Caco-2 (cell line): ENCODE measurements at regions of chr3 and their contacts with region 1.

Region 1: DNA sequence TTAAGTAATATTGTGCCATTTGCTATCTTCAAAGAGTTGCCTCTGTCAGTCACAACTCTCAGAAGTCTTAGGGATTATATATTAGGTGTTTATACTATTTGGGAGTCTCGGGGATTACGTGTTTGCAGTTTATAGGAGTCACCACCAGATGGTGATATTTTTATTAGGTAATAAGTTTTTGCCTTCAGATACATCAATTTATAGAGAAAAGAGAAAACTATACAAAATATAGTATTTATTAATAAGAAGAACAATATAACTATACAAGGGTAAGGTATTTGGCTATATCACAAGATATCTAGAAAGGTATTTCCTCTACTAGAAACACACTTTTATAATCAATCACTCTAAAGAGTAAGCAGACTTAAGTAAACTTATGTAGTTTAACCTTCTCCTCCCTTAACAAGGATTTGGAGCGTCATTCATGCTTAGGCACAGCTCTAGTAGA is 10.7 kb upstream of the DHX36 start:
- DNase-seq: peak in 1 of 2 experiments; percentile 34
- H3K4me3 ChIP-seq: no peak overlapping the region
- H3K4me3 Mint-ChIP-seq: no peak overlapping the region
- H3K27ac Mint-ChIP-seq: no peak overlapping the region
- H3K4me1 ChIP-seq: peaks cover 19% of the 10 kb centered on the region
- H3K4me1 Mint-ChIP-seq: peaks cover 14% of the 10 kb centered on the region
- H3K27me3 ChIP-seq: no peaks in the 10 kb centered on the region
- H3K27me3 Mint-ChIP-seq: no peaks in the 10 kb centered on the region
- CTCF ChIP-seq: peak; percentile 44 to 55

Region 2: GRCh38 chr3:153976891-153977554 is 358.0 kb before region 1 on chr3:
- CTCF ChIA-PET with region 1: no interaction called
- POLR2A ChIA-PET with region 1: no interaction called
- intact Hi-C with region 1: no loop called
- DNase-seq: no peak
- H3K4me3 ChIP-seq: no peak overlapping the region
- H3K4me3 Mint-ChIP-seq: no peak overlapping the region
- H3K27ac Mint-ChIP-seq: no peak overlapping the region
- H3K4me1 ChIP-seq: peaks cover 7% of the 10 kb centered on the region; the same call in 1 of the 2 replicates
- H3K4me1 Mint-ChIP-seq: peaks cover 5% of the 10 kb centered on the region
- H3K27me3 ChIP-seq: no peaks in the 10 kb centered on the region
- H3K27me3 Mint-ChIP-seq: peaks cover 4% of the 10 kb centered on the region
- CTCF ChIP-seq: no peak

Region 3: DNA sequence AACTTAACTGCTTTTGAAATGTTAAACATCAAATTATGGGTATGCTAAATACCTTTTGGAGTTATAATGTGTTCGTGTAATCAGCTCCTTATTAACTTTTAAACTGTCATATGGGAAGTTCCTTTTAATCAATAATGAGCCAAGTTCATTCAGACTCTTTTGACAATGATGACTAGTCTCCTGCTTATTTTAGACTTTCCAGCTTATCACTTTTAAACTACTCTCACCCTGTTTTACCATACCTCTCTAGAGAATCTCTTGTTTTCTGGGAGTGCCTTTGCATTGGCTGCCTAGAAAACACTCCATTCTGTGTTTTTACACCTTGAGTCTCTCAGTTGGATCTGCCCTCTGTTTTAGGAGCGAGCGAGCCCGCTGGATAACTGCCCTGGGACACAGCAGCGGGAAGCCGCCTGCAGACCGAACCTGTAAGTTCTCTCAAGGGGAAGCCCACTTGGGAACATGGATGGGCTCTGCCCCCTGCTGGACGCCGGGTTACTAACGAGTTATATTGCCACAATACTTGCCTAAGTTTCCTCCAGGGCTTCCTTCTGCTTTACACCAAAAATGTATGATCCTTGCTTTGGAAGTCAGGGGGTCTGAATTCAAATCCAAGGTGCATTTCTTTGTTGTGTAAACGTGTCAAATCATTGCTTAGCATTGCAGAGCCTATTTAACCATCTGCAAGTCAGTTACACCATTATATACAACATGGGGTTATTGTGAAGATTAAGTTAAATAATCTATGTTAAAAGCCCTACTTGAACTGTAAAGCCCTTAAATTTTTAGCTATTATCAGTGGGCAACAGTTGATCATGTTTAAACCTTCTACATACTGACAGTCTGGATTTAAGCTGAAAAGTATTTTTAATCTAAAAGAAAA is 82.0 kb before region 1 on chr3:
- CTCF ChIA-PET with region 1: interaction called, 10 read pairs
- POLR2A ChIA-PET with region 1: no interaction called
- intact Hi-C with region 1: no loop called
- DNase-seq: peak; percentile 83 to 89
- H3K4me3 ChIP-seq: no peak overlapping the region
- H3K4me3 Mint-ChIP-seq: no peak overlapping the region
- H3K27ac Mint-ChIP-seq: peak overlapping the region; percentile 11
- H3K4me1 ChIP-seq: no peaks in the 10 kb centered on the region
- H3K4me1 Mint-ChIP-seq: peaks cover 6% of the 10 kb centered on the region
- H3K27me3 ChIP-seq: no peaks in the 10 kb centered on the region
- H3K27me3 Mint-ChIP-seq: no peaks in the 10 kb centered on the region
- CTCF ChIP-seq: peak; percentile 83 to 91

Region 4: GRCh38 chr3:154428286-154429206 is 93.5 kb after region 1 on chr3:
- CTCF ChIA-PET with region 1: no interaction called
- POLR2A ChIA-PET with region 1: no interaction called
- intact Hi-C with region 1: loop called (anchors 1 kb)
- DNase-seq: no peak
- H3K4me3 ChIP-seq: no peak overlapping the region
- H3K4me3 Mint-ChIP-seq: no peak overlapping the region
- H3K27ac Mint-ChIP-seq: no peak overlapping the region
- H3K4me1 ChIP-seq: peaks cover 11% of the 10 kb centered on the region; the same call in 1 of the 2 replicates
- H3K4me1 Mint-ChIP-seq: no peaks in the 10 kb centered on the region
- H3K27me3 ChIP-seq: no peaks in the 10 kb centered on the region
- H3K27me3 Mint-ChIP-seq: no peaks in the 10 kb centered on the region
- CTCF ChIP-seq: no peak

Region 5: GRCh38 chr3:154552338-154552737 is 217.3 kb after region 1 on chr3:
- CTCF ChIA-PET with region 1: no interaction called
- POLR2A ChIA-PET with region 1: no interaction called
- intact Hi-C with region 1: loop called (anchors 5 kb)
- DNase-seq: peak in 1 of 2 experiments; percentile 27
- H3K4me3 ChIP-seq: no peak overlapping the region
- H3K4me3 Mint-ChIP-seq: no peak overlapping the region
- H3K27ac Mint-ChIP-seq: no peak overlapping the region
- H3K4me1 ChIP-seq: no peaks in the 10 kb centered on the region
- H3K4me1 Mint-ChIP-seq: no peaks in the 10 kb centered on the region
- H3K27me3 ChIP-seq: no peaks in the 10 kb centered on the region
- H3K27me3 Mint-ChIP-seq: peaks cover 3% of the 10 kb centered on the region
- CTCF ChIP-seq: peak in 1 of 2 experiments; percentile 27

Region 6: DNA sequence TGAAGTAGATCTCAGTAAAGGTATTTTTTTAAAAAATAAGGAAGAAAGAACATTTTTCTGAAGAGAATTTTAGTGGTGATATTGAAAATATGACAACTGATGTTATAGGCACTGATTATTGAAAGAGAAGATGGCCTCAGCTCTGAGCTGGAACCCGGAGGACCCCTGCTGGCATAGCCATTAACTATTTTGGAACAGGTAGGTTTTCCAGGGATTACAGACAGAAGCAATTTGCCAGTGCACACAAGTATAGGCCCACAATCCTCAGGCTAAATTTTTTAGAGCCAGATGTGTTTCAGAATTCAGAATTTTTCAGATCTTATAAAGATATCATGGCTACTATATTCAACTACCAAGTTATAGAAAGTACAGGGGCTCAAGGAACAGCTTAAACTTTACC is 411.0 kb after region 1 on chr3:
- CTCF ChIA-PET with region 1: no interaction called
- POLR2A ChIA-PET with region 1: no interaction called
- intact Hi-C with region 1: loop called (anchors 1 kb)
- DNase-seq: peak in 1 of 2 experiments; percentile 32
- H3K4me3 ChIP-seq: no peak overlapping the region
- H3K4me3 Mint-ChIP-seq: no peak overlapping the region
- H3K27ac Mint-ChIP-seq: no peak overlapping the region
- H3K4me1 ChIP-seq: no peaks in the 10 kb centered on the region
- H3K4me1 Mint-ChIP-seq: no peaks in the 10 kb centered on the region
- H3K27me3 ChIP-seq: no peaks in the 10 kb centered on the region
- H3K27me3 Mint-ChIP-seq: peaks cover 6% of the 10 kb centered on the region
- CTCF ChIP-seq: peak in 1 of 2 experiments; percentile 43